Mammary epithelial cell (primary cell): ENCODE measurements at regions of chr6 and their contacts with region 1.

Region 1: GRCh38 chr6:99330159-99330558 is 19.3 kb downstream of the FAXC start:
- DNase-seq: peak; percentile 63
- H3K4me3 ChIP-seq: no peak overlapping the region
- H3K27ac ChIP-seq: no peak overlapping the region
- H3K4me1 ChIP-seq: no peaks in the 10 kb centered on the region
- H3K27me3 ChIP-seq: no peaks in the 10 kb centered on the region
- CTCF ChIP-seq: peak; percentile 80 to 83

Region 2: DNA sequence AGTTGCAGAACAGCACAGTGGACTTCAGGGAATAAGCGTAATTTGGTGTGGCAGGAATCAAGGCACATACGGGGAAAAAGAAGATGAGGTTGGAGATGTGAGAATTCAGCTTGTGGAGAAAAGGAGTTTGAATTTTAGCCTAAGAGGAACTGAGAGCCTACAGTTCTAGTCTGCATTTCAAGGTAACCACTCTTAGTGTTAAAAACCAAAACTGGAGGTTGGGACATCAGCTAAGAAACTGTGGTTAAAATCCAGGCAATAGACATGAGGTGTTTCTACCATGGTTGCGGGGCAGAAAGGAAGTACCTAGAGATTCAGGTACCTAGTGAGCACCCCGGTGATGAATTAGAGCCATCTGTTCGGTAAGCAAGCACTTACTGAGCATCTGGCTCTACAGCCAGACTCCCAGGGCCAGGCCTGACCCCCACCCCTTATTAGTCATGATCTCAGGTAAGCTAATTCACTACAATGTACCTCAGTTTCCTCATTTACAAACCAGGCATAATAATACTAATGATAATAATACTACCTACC is 25.1 kb before region 1 on chr6:
- CTCF ChIA-PET with region 1: no interaction called
- dilution Hi-C with region 1: no loop called
- in situ Hi-C with region 1: no loop called
- intact Hi-C with region 1: no loop called
- DNase-seq: no peak
- H3K4me3 ChIP-seq: no peak overlapping the region
- H3K27ac ChIP-seq: no peak overlapping the region
- H3K4me1 ChIP-seq: no peaks in the 10 kb centered on the region
- H3K27me3 ChIP-seq: no peaks in the 10 kb centered on the region
- CTCF ChIP-seq: no peak

Region 3: GRCh38 chr6:99393698-99394531 is 63.8 kb after region 1 on chr6 and contains the start of gene COQ3:
- CTCF ChIA-PET with region 1: interaction called, 3 read pairs
- dilution Hi-C with region 1: no loop called
- in situ Hi-C with region 1: no loop called
- intact Hi-C with region 1: loop called (anchors 1 kb)
- DNase-seq: peak; percentile 65
- H3K4me3 ChIP-seq: peak within 1 kb of the TSS; percentile 74 to 88 (median 84)
- H3K27ac ChIP-seq: peak within 1 kb of the TSS; percentile 69
- H3K4me1 ChIP-seq: no peaks in the 10 kb centered on the region
- H3K27me3 ChIP-seq: no peaks in the 10 kb centered on the region
- CTCF ChIP-seq: no peak
- total RNA-seq, gene COQ3: 4.3 to 12.8 TPM

Region 4: GRCh38 chr6:99425647-99426453 is 95.7 kb after region 1 on chr6:
- CTCF ChIA-PET with region 1: interaction called, 4 read pairs
- dilution Hi-C with region 1: no loop called
- in situ Hi-C with region 1: no loop called
- intact Hi-C with region 1: loop called (anchors 1 kb)
- DNase-seq: peak; percentile 77
- H3K4me3 ChIP-seq: peak overlapping the region; percentile 76 to 89 (median 88)
- H3K27ac ChIP-seq: peak overlapping the region; percentile 98
- H3K4me1 ChIP-seq: peaks cover 13% of the 10 kb centered on the region
- H3K27me3 ChIP-seq: no peaks in the 10 kb centered on the region
- CTCF ChIP-seq: peak in 1 of 2 donors; percentile 58

Region 5: GRCh38 chr6:99588618-99589289 is 258.6 kb after region 1 on chr6:
- CTCF ChIA-PET with region 1: no interaction called
- dilution Hi-C with region 1: no loop called
- in situ Hi-C with region 1: no loop called
- intact Hi-C with region 1: loop called (anchors 10 kb)
- DNase-seq: peak; percentile 73
- H3K4me3 ChIP-seq: peak overlapping the region; percentile 51 to 65 (median 60)
- H3K27ac ChIP-seq: no peak overlapping the region
- H3K4me1 ChIP-seq: peaks cover 10% of the 10 kb centered on the region
- H3K27me3 ChIP-seq: peaks cover 32% of the 10 kb centered on the region
- CTCF ChIP-seq: peak; percentile 46 to 79

Region 6: DNA sequence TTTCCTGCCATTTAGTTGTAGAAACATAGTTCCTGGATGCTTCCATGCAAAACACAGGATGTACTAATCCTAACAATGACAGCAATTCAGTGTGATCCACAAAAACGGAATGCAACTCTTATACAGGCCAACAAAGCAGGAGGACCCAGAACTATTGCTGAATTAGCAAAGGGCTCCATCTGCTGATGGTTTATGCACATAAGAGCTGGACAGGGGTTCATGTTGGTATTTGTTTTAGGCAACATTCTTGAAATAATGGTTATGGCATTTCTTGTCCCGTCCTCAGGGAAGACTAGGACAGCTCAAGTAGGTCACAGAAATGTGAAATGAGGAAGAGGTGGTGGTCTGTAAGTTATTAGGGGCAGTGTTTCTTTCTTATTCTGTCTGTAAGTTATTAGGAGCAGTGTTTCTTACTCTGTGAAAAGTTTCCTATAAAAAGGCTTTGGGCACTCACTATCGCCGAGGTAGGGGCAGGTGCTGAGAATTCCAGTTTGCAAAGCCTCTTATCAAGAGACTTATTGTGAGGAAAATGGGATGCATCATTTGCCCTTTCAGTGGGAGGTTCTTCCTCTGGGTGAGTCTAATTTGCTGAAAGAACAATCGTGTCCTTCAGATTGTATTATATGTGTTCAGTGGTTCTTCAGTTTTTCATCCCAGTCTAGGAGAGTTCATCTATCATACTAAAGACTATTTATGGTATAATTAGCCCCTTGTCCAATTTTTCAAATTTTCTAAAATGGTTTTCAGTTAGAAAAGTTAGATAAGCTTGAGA is 492.8 kb after region 1 on chr6:
- CTCF ChIA-PET with region 1: no interaction called
- dilution Hi-C with region 1: no loop called
- in situ Hi-C with region 1: no loop called
- intact Hi-C with region 1: loop called (anchors 5 kb)
- DNase-seq: peak; percentile 69
- H3K4me3 ChIP-seq: peak overlapping the region in 2 of 3 experiments; percentile 17 to 30
- H3K27ac ChIP-seq: no peak overlapping the region
- H3K4me1 ChIP-seq: peaks cover 9% of the 10 kb centered on the region
- H3K27me3 ChIP-seq: no peaks in the 10 kb centered on the region
- CTCF ChIP-seq: peak; percentile 66 to 75

Region 7: GRCh38 chr6:99846006-99846405 is 515.8 kb after region 1 on chr6:
- CTCF ChIA-PET with region 1: no interaction called
- dilution Hi-C with region 1: no loop called
- in situ Hi-C with region 1: no loop called
- intact Hi-C with region 1: no loop called
- DNase-seq: no peak
- H3K4me3 ChIP-seq: no peak overlapping the region
- H3K27ac ChIP-seq: no peak overlapping the region
- H3K4me1 ChIP-seq: no peaks in the 10 kb centered on the region
- H3K27me3 ChIP-seq: no peaks in the 10 kb centered on the region
- CTCF ChIP-seq: no peak